Sigmoid colon (tissue), 7 donors: ENCODE measurements at regions of chrX and their contacts with region 1.

Region 1: DNA sequence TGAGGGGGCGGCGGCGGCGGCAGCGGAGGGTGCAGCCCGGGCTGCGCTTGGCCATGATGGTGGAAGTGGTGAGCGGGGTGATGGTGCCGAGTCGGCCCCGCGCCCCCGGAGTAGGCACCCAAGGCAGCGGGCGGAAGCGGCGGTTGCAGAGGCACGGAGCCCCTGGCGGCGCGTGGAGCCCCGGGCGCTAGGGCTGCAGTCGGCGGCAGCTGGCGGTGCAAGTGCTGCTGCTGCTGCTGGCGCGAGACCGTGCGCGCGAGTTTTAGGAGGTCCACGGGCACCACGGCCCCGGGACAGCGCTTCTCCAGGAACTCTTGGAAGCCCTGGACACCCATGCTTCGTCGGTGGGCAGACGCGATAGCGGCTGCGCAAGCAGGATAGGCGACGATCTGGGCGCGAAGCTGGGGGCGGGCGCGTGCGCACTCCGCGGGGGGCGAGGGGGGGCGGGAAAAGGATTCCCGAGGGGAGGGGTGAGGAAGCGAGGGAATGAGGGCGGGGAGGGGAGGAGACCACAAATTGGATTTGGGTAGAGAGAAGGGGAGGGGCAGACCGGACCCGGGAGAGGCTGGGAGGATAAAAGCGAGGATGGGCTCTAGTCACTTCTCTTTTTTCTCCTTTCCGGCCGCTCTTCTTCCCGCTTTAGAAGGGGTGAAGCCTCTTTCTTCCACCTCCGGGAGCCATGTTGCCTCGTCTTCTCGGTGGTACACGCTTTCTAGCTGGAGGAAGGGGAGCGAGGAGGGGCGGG is at the start of gene FAM120C:
- DNase-seq: peak; percentile 84
- H3K4me3 ChIP-seq: peak within 1 kb of the TSS; percentile 61 to 93 (median 78)
- H3K27ac ChIP-seq: peak within 1 kb of the TSS; percentile 88 to 94 (median 92)
- H3K4me1 ChIP-seq: peaks cover 0 to 33% (median 10%) of the 10 kb centered on the region in 4 donors
- H3K27me3 ChIP-seq: no peaks in the 10 kb centered on the region
- CTCF ChIP-seq: no peak
- EP300 ChIP-seq: no peak
- POLR2A ChIP-seq: no peak
- total RNA-seq, gene FAM120C: 4.4 to 7.7 (median 6.0) TPM

Region 2: DNA sequence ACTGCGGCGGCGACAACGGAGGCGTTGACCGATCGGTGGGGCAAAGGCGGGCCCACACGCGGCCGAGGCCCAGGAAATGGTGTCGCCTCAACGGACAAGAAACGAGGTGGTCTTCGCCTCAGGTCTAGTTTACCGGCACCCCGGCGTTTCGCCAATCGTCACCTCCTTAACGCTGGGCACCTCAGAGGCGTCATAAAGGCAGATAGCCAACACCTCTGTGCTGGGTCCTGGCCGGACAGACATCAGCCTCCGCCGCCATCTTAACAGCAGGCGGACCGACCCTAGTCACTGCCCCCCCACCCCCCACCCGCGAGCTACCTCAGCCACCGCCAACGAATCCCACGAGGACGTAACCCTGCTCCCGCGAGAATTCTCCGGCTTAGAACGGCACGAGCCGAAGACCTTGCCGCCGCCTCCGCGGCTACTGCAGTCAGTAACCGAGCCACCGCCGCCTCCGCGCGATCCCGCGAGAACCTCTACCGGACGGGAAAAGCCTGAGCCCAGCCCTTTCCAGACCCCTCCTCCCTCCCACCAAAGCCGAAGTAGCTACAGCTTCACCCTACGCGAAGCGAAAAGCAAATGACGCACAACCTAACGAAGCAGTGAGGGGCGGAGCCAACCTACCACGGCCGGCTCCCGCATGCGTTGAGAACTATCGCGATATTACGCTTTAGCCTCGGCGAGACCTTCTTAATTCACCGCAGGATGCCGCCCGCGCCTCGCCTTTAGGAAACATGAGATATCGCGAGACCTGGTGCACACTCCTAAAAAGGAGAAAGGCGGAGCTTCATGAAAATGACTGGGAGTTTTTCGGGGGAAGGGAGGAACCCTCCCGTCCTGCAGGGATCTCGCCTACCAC is 499.3 kb before region 1 on chrX:
- intact Hi-C with region 1: loop called (anchors 5 kb)
- DNase-seq: peak; percentile 98
- H3K4me3 ChIP-seq: peak overlapping the region; percentile 48 to 69 (median 62)
- H3K27ac ChIP-seq: peak overlapping the region; percentile 89 to 92 (median 89)
- H3K4me1 ChIP-seq: peaks cover 0 to 22% (median 9%) of the 10 kb centered on the region in 4 donors
- H3K27me3 ChIP-seq: no peaks in the 10 kb centered on the region
- CTCF ChIP-seq: no peak
- EP300 ChIP-seq: no peak
- POLR2A ChIP-seq: peak; percentile 42 to 50

Region 3: DNA sequence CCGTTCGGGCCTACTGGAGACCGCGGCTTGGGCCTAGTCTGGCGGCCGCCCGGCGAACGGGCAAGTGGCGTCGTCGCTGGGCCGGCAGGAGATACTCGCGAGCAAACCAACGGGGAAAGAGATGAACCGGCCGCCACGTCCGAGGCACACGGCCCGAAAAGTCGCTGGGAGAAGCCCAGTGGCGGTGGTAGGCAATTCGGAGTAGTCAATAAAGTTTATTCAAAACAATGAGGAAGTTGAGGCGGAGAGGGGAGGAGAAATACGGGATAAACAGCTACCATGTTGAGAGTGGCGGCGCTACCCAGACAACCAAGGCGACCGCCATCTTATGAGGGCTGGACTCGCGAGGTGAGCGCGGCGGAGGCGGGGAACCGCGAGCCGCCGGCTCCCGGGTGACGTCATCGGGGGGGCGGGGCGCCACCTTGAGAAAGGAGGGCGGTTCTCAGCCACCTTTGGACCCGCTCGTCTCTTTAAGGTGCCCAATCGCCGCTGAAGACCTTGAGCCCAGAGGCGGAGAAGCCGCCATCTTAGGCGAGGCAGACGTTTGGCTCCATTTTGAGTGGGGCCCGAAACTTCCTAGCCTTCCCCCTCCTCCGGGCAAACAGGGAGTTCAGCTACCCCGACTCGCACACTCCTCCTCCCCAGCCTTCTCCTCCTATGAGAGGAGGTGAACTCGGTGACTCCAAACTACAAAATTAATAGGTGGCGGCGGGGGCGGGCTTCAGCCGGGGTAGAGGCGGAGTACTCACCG is 138.7 kb before region 1 on chrX and contains the start of gene PHF8:
- intact Hi-C with region 1: loop called (anchors 2 kb)
- DNase-seq: peak; percentile 97
- H3K4me3 ChIP-seq: peak within 1 kb of the TSS; percentile 62 to 76 (median 68)
- H3K27ac ChIP-seq: peak within 1 kb of the TSS; percentile 91 to 95 (median 93)
- H3K4me1 ChIP-seq: no peaks in the 10 kb centered on the region
- H3K27me3 ChIP-seq: no peaks in the 10 kb centered on the region
- CTCF ChIP-seq: no peak
- EP300 ChIP-seq: no peak
- POLR2A ChIP-seq: peak; percentile 16 to 31
- total RNA-seq, gene PHF8: 15.3 to 44.9 (median 22.1) TPM

Region 4: DNA sequence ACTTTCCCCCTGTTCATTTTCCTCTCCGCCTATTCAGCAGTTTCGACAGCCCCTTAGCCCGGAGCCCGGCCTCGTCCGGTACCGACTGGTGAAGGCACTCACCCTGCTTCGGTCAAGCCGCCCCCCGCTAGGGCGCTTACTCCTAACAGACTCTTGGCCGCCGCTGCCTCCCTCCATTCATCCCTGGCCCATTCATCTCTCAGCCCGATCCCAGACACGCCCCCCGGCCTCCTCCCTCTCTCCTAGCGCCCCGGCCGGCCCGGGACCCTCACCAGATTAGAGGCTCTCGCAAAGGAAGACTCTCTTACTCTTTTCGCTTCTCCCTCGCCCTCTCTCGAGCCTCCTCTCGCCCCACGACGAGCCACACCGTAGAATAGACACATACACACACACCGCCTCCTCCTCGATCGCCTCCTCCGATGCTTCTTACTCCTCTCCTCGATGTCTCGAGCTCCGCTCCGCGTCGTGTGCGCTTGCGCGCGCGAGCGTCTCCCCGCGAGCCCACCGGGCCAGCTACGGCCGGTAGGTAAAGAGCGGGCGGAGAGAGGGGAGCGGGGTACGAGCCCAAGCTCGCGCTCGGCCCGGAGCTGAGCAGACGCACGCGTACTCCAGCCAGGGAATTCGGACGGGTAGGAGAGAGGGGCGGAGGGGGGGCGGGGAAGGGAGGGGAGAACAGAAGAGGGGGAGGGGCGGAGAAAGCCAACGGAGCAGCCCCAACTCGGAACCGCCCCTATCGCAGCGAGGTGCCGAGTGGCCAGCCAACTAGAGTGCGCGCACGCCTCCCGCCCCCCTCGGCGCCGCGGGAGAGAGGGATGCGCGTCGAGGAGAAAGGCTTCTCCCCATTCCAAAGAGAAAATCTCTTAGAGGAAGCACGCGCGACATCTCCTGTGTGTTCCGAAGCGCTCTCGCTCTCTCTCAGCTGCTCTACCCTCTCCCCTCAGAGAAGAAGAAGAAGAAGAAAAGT is 174.7 kb after region 1 on chrX and contains the start of gene WNK3:
- intact Hi-C with region 1: loop called (anchors 5 kb)
- DNase-seq: peak; percentile 92
- H3K4me3 ChIP-seq: peak within 1 kb of the TSS; percentile 34 to 55 (median 52)
- H3K27ac ChIP-seq: peak within 1 kb of the TSS; percentile 68 to 78 (median 70)
- H3K4me1 ChIP-seq: peaks cover 0 to 4% (median 0%) of the 10 kb centered on the region in 4 donors
- H3K27me3 ChIP-seq: no peaks in the 10 kb centered on the region
- CTCF ChIP-seq: no peak
- EP300 ChIP-seq: no peak
- POLR2A ChIP-seq: no peak
- total RNA-seq, gene WNK3: 1.6 to 1.9 (median 1.7) TPM

Region 5: DNA sequence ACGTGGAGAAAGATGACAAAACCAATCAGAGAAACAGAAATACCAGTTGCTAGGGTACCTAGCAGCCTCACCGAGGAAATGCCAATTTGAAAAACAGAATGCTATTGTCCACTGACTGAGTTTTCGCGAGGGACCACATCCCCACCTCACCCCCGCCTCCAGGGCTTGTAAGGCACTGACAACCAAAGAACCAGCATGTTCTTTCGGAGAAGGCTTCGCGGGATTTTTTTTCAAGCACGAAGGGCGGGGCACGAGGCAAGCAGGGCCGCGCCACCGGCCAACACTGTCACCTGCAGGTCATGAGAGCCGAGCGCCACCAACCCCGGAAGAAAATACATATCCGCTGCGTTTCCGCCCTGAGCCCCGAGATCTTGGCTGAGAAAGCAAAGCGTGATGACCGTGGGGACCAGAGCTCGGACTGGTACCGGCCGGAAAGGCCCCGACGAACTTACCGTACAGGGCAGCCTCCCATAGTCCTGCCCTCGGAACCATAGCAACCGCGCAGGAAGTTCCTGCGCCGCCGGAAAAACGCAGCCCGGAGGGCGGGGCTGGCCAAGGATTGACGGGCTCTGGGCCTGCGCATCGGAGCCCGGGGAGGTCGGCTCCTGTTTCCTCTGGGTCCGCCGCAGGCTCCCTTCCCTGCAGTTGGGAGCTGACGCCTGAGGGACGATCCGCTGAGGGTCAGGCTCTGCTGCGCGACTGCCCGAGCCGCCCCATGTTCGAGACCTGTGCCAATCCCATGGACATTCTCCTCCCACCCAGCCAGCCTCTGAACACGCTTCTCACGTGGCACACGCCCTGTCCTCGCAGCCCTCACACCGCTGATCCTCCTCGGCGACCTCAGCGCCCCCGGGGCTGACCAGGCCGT is 977.9 kb after region 1 on chrX:
- intact Hi-C with region 1: loop called (anchors 5 kb)
- DNase-seq: peak; percentile 95
- H3K4me3 ChIP-seq: peak overlapping the region; percentile 37 to 58 (median 54)
- H3K27ac ChIP-seq: peak overlapping the region; percentile 86 to 93 (median 88)
- H3K4me1 ChIP-seq: peaks cover 0 to 3% (median 0%) of the 10 kb centered on the region in 4 donors
- H3K27me3 ChIP-seq: no peaks in the 10 kb centered on the region
- CTCF ChIP-seq: no peak
- EP300 ChIP-seq: peak in 1 of 4 donors; percentile 37
- POLR2A ChIP-seq: peak; percentile 72 to 74